Ovary (tissue), 10 donors: ENCODE measurements at regions of chr2 and their contacts with region 1.

Region 1: GRCh38 chr2:197378494-197379307 is 56.1 kb downstream of the SF3B1 start:
- DNase-seq: peak; percentile 24 to 53 (median 48)
- H3K4me3 ChIP-seq: no peak overlapping the region
- H3K27ac ChIP-seq: no peak overlapping the region
- H3K4me1 ChIP-seq: no peaks in the 10 kb centered on the region
- H3K27me3 ChIP-seq: no peaks in the 10 kb centered on the region
- CTCF ChIP-seq: peak; percentile 52 to 64 (median 59)
- EP300 ChIP-seq: no peak
- POLR2A ChIP-seq: no peak

Region 2: GRCh38 chr2:197011799-197012641 is 366.7 kb before region 1 on chr2:
- intact Hi-C with region 1: loop called in 2 of 4 experiments (anchors 10 kb)
- DNase-seq: no peak
- H3K4me3 ChIP-seq: no peak overlapping the region
- H3K27ac ChIP-seq: no peak overlapping the region
- H3K4me1 ChIP-seq: no peaks in the 10 kb centered on the region
- H3K27me3 ChIP-seq: no peaks in the 10 kb centered on the region
- CTCF ChIP-seq: peak; percentile 47 to 66 (median 56)
- EP300 ChIP-seq: no peak
- POLR2A ChIP-seq: no peak

Region 3: GRCh38 chr2:197113275-197113711 is 265.4 kb before region 1 on chr2:
- intact Hi-C with region 1: loop called in 2 of 4 experiments (anchors 5 kb)
- DNase-seq: no peak
- H3K4me3 ChIP-seq: no peak overlapping the region
- H3K27ac ChIP-seq: no peak overlapping the region
- H3K4me1 ChIP-seq: no peaks in the 10 kb centered on the region
- H3K27me3 ChIP-seq: no peaks in the 10 kb centered on the region
- CTCF ChIP-seq: peak; percentile 33 to 47 (median 35)
- EP300 ChIP-seq: no peak
- POLR2A ChIP-seq: no peak

Region 4: GRCh38 chr2:197124639-197125390 is 253.9 kb before region 1 on chr2:
- intact Hi-C with region 1: loop called in 1 of 4 experiments (anchors 5 kb)
- DNase-seq: no peak
- H3K4me3 ChIP-seq: no peak overlapping the region
- H3K27ac ChIP-seq: no peak overlapping the region
- H3K4me1 ChIP-seq: no peaks in the 10 kb centered on the region
- H3K27me3 ChIP-seq: no peaks in the 10 kb centered on the region
- CTCF ChIP-seq: no peak
- EP300 ChIP-seq: no peak
- POLR2A ChIP-seq: no peak

Region 5: DNA sequence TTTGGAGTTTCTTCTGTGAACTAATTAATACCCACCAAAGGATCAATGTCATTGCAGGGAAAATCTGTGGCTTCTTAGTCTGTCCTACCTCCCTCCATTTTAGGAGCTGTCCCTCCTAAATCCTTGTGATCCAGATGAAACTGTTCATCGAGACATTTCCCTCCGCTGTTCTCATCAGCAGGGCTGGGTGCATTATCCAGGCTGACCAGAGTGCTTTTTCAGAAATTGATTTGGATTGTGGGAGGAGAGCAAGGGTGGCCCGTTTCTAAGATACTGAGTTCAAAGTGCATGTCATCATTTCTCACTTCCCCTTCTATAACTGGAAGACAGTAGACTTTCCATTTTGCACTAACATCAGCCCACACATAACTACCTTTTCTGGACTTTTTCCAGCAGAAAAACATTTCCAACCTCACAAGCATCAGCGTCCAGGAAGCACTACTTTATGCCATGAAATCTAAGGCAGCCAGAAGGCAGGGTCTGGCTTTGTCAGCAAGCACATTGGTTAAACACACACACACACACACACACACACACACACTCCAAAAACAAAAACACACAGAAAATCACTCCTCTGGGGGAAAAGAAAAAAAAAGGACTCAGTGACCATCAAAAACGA is 162.2 kb before region 1 on chr2:
- intact Hi-C with region 1: loop called in 1 of 4 experiments (anchors 10 kb)
- DNase-seq: no peak
- H3K4me3 ChIP-seq: no peak overlapping the region
- H3K27ac ChIP-seq: no peak overlapping the region
- H3K4me1 ChIP-seq: peaks cover 4% of the 10 kb centered on the region
- H3K27me3 ChIP-seq: no peaks in the 10 kb centered on the region
- CTCF ChIP-seq: no peak
- EP300 ChIP-seq: no peak
- POLR2A ChIP-seq: no peak

Region 6: DNA sequence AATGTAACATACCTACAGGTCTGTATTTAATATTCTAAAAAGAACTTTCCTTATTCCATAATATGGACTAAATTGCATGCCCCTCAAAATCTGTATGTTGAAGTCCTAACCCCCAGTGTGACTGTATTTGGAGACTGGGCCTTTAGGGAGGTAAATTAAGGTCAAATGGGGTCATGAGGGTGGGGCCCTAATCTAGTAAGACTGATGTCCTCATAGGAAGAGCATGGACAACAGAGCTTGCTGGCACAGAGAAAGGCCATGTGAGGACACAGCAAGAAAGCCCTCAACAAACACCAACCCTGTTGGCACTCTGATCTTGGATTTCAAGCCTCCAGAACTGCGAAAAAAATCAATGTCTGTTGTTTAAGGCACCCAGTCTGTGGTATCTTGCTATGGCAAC is 37.6 kb after region 1 on chr2:
- intact Hi-C with region 1: no loop called
- DNase-seq: no peak
- H3K4me3 ChIP-seq: no peak overlapping the region
- H3K27ac ChIP-seq: no peak overlapping the region
- H3K4me1 ChIP-seq: no peaks in the 10 kb centered on the region
- H3K27me3 ChIP-seq: no peaks in the 10 kb centered on the region
- CTCF ChIP-seq: no peak
- EP300 ChIP-seq: no peak
- POLR2A ChIP-seq: no peak

Region 7: DNA sequence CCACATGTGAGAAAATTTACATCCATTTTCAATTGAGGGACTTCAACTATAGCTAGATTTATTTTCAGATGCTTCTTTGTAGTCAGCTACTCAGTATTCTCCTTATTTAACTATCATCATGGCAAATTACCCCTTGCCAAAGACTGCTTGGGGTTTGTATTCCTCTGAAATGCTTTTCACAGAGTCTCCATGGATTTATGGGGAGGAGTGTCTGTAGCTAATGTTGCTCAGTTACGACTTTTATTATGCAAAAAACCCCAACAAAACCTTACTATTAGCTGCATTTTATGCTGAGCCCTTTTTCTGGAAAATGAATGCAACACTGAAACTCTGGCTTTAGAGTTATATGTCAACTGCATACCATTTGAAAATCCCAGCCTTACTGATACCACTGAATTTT is 218.1 kb after region 1 on chr2:
- intact Hi-C with region 1: no loop called
- DNase-seq: no peak
- H3K4me3 ChIP-seq: no peak overlapping the region
- H3K27ac ChIP-seq: no peak overlapping the region
- H3K4me1 ChIP-seq: no peaks in the 10 kb centered on the region
- H3K27me3 ChIP-seq: no peaks in the 10 kb centered on the region
- CTCF ChIP-seq: no peak
- EP300 ChIP-seq: no peak
- POLR2A ChIP-seq: no peak